ENCODE measurements at regions of chr20 and their contacts with region 1.

Region 1: GRCh38 chr20:13777171-13777601 is 7.5 kb downstream of the ESF1 start:
- DNase-seq: no peak
- ATAC-seq: peak; percentile 57
- H3K4me3 ChIP-seq: no peak overlapping the region
- H3K27ac ChIP-seq: peak overlapping the region; percentile 15; the same call in 1 of the 2 replicates
- H3K4me1 ChIP-seq: peaks cover 13% of the 10 kb centered on the region; the same call in 1 of the 2 replicates
- H3K27me3 ChIP-seq: no peaks in the 10 kb centered on the region
- CTCF ChIP-seq: no peak
- EP300 ChIP-seq: no peak
- POLR2A ChIP-seq: no peak
- RAD21 ChIP-seq: no peak

Region 2: DNA sequence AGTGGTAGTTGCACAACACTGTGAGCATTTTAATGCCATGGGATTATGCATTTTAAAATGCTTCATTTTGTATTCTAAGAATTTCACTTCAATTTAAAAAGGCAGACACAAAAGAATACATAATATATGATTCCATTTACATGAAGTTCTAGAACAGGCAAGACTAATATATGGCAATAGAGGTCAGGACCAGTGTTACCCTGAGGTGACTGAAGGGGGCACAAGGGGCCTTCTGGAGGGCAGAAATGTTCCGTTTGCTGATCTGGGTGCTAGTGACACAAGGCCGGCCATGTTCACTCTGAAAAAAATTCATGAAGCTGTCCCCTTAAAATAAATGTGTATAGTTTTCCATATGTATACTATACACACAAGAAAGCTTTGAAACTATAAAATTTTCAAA is 167.0 kb before region 1 on chr20:
- CTCF ChIA-PET with region 1: interaction called, 92 read pairs
- POLR2A ChIA-PET with region 1: no interaction called
- RAD21 ChIA-PET with region 1: interaction called, 41 read pairs
- SMC1A ChIA-PET with region 1: interaction called, 46 read pairs
- in situ Hi-C with region 1: no loop called
- intact Hi-C with region 1: loop called (anchors 2 kb)
- DNase-seq: no peak
- ATAC-seq: peak; percentile 89
- H3K4me3 ChIP-seq: no peak overlapping the region
- H3K27ac ChIP-seq: no peak overlapping the region
- H3K4me1 ChIP-seq: no peaks in the 10 kb centered on the region
- H3K27me3 ChIP-seq: no peaks in the 10 kb centered on the region
- CTCF ChIP-seq: peak; percentile 36 to 59 (median 41); a peak in 3 of 6 replicates
- EP300 ChIP-seq: no peak
- POLR2A ChIP-seq: no peak
- RAD21 ChIP-seq: peak; percentile 57